Activated CD8-positive, alpha-beta T cell treated with anti-CD3 and anti-CD28 coated beads for 36 hours (primary cell): ENCODE measurements at regions of chr21 and their contacts with region 1.

Region 1: DNA sequence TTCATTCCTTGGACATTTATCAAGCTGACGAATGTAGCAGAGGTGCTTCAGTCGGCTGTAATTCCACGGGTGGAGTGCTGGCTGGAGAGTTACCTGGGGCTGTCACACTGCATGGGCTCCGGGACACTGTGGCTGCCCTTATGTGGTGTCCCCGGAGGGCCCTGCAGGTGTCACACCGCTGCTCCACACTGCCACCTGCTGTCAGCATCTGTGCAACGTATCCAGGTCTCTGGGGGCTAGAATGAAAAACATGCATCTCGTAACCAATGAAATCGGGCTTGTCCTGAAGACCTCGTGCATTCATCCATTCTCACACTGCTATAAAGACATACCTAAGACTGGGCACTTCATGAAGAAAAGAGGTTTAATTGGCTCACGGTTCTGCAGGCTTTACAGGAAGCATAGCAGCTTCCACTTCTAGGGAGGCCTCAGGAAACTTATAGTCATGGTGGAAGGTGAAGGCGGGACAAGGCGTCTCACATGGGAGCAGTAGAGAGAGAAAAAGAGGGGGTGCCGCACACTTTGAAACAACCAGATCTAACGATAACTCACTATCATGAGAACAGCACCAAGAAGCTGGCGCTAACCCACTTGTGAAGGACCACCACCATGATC is 46.7 kb upstream of the PCBP3 start:
- DNase-seq: peak; percentile 91
- ATAC-seq: peak; percentile 77
- H3K4me3 Mint-ChIP-seq: no peak overlapping the region
- H3K27ac Mint-ChIP-seq: no peak overlapping the region
- H3K4me1 Mint-ChIP-seq: peaks cover 20% of the 10 kb centered on the region
- H3K27me3 Mint-ChIP-seq: no peaks in the 10 kb centered on the region
- CTCF ChIP-seq: peak; percentile 91

Region 2: GRCh38 chr21:45478115-45478801 is 118.6 kb before region 1 on chr21:
- CTCF ChIA-PET with region 1: interaction called, 3 read pairs
- POLR2A ChIA-PET with region 1: no interaction called
- intact Hi-C with region 1: loop called (anchors 5 kb)
- DNase-seq: peak; percentile 89
- ATAC-seq: peak; percentile 80
- H3K4me3 Mint-ChIP-seq: peak overlapping the region; percentile 67
- H3K27ac Mint-ChIP-seq: peak overlapping the region; percentile 87
- H3K4me1 Mint-ChIP-seq: peaks cover 26% of the 10 kb centered on the region
- H3K27me3 Mint-ChIP-seq: no peaks in the 10 kb centered on the region
- CTCF ChIP-seq: peak; percentile 98

Region 3: DNA sequence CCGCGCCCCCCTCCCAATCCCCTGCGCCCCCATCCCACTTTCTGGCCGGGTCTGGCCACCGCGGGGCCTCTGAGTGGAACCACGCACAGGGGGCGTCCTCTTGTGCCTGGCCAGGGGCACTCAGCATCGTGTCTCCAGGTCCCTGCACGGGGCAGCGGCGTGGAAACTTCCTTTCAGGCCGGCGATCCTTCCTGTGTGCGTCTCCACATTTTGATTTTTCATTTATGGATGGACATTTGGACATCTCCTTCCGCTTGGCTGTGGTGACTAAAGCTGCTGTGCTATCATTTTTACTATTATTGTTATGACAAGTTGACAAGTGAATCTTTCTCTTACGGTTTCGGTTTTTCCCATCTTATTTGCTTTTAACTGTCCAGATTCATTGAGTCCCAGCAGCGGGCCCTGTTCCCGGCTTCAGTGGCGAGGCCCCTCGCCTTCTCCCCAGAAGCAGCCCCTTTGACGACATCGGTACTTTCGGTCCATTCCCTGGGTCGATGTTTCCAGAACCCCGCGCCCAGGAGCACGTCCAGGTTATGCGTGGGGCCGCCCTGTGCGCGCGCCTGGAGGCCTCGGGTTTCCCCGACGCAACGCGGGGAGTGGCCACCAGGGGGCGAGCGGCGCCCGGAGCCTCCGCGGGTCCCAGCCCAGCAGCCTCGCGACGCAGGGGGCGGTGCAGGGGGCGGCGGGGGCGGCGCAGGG is 42.2 kb before region 1 on chr21:
- CTCF ChIA-PET with region 1: interaction called, 15 read pairs
- POLR2A ChIA-PET with region 1: interaction called, 8 read pairs
- intact Hi-C with region 1: loop called (anchors 2 kb)
- DNase-seq: peak; percentile 86
- ATAC-seq: peak; percentile 76
- H3K4me3 Mint-ChIP-seq: peak overlapping the region; percentile 79
- H3K27ac Mint-ChIP-seq: peak overlapping the region; percentile 86
- H3K4me1 Mint-ChIP-seq: peaks cover 25% of the 10 kb centered on the region
- H3K27me3 Mint-ChIP-seq: no peaks in the 10 kb centered on the region
- CTCF ChIP-seq: peak; percentile 72

Region 4: GRCh38 chr21:45724345-45724961 is 127.6 kb after region 1 on chr21:
- CTCF ChIA-PET with region 1: no interaction called
- POLR2A ChIA-PET with region 1: no interaction called
- intact Hi-C with region 1: no loop called
- DNase-seq: no peak
- ATAC-seq: no peak
- H3K4me3 Mint-ChIP-seq: no peak overlapping the region
- H3K27ac Mint-ChIP-seq: no peak overlapping the region
- H3K4me1 Mint-ChIP-seq: peaks cover 11% of the 10 kb centered on the region
- H3K27me3 Mint-ChIP-seq: peaks cover 2% of the 10 kb centered on the region
- CTCF ChIP-seq: no peak